B cell (primary cell): ENCODE measurements at regions of chr7 and their contacts with region 1.

Region 1: GRCh38 chr7:151368136-151368571 is 26.5 kb downstream of the NUB1 start:
- DNase-seq: peak; percentile 85
- ATAC-seq: peak; percentile 100
- H3K4me3 ChIP-seq: no peak overlapping the region
- H3K4me3 Mint-ChIP-seq: no peak overlapping the region
- H3K27ac ChIP-seq: no peak overlapping the region
- H3K27ac Mint-ChIP-seq: peak overlapping the region; percentile 13
- H3K4me1 ChIP-seq: peaks cover 0 to 5% of the 10 kb centered on the region in 2 donors
- H3K4me1 Mint-ChIP-seq: peaks cover 8% of the 10 kb centered on the region
- H3K27me3 ChIP-seq: no peaks in the 10 kb centered on the region
- H3K27me3 Mint-ChIP-seq: no peaks in the 10 kb centered on the region
- CTCF ChIP-seq: peak; percentile 94

Region 2: DNA sequence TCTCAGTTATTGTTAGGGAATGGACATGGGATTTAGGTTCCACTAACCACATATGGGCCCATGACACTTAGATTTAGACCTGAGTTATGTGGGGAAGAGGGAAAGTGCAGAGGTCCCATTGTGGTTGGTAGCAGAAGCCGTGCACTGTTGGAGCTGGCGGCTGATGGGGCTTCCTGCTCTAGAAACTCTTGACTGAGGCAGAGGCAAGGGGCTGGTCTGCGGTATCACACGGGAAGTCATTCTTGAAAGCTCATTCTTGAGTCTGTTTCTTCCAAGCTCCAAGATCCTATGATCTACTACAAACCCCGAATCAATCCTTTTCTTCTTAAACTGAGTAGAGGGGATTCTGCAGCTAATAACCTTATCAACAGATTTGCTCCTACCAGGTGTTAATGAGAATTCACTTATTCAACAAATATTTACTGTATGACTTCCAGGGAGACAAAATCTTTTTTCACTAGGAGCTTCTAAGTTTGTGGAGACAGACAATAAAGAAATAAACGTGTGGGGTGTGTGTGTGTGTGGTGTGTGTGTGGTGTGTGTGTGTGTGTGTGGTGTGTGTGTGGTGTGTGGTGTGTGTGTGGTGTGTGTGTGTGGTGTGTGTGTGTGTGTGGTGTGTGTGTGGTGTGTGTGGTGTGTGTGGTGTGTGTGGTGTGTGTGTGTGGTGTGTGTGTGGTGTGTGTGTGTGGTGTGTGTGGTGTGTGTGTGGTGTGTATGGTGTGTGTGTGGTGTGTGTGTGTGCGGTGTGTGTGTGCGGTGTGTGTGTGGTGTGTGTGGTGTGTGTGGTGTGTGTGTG is 458.8 kb before region 1 on chr7:
- CTCF ChIA-PET with region 1: no interaction called
- POLR2A ChIA-PET with region 1: no interaction called
- intact Hi-C with region 1: no loop called
- DNase-seq: no peak
- ATAC-seq: no peak
- H3K4me3 ChIP-seq: no peak overlapping the region
- H3K4me3 Mint-ChIP-seq: no peak overlapping the region
- H3K27ac ChIP-seq: no peak overlapping the region
- H3K27ac Mint-ChIP-seq: no peak overlapping the region
- H3K4me1 ChIP-seq: peaks cover 0 to 4% of the 10 kb centered on the region in 2 donors
- H3K4me1 Mint-ChIP-seq: no peaks in the 10 kb centered on the region
- H3K27me3 ChIP-seq: peaks cover 0 to 14% (median 2%) of the 10 kb centered on the region in 4 experiments
- H3K27me3 Mint-ChIP-seq: peaks cover 22% of the 10 kb centered on the region
- CTCF ChIP-seq: no peak

Region 3: GRCh38 chr7:151315038-151315655 is 53.0 kb before region 1 on chr7:
- CTCF ChIA-PET with region 1: interaction called, 81 read pairs
- POLR2A ChIA-PET with region 1: no interaction called
- intact Hi-C with region 1: no loop called
- DNase-seq: peak; percentile 85
- ATAC-seq: peak; percentile 86
- H3K4me3 ChIP-seq: no peak overlapping the region
- H3K4me3 Mint-ChIP-seq: no peak overlapping the region
- H3K27ac ChIP-seq: no peak overlapping the region
- H3K27ac Mint-ChIP-seq: no peak overlapping the region
- H3K4me1 ChIP-seq: peaks cover 0 to 3% of the 10 kb centered on the region in 2 donors
- H3K4me1 Mint-ChIP-seq: peaks cover 2% of the 10 kb centered on the region
- H3K27me3 ChIP-seq: peaks cover 0 to 4% (median 0%) of the 10 kb centered on the region in 4 experiments
- H3K27me3 Mint-ChIP-seq: no peaks in the 10 kb centered on the region
- CTCF ChIP-seq: peak; percentile 85

Region 4: GRCh38 chr7:151351027-151351426 is 17.1 kb before region 1 on chr7:
- CTCF ChIA-PET with region 1: interaction called, 77 read pairs
- POLR2A ChIA-PET with region 1: no interaction called
- intact Hi-C with region 1: loop called (anchors 1 kb)
- DNase-seq: peak; percentile 47
- ATAC-seq: no peak
- H3K4me3 ChIP-seq: no peak overlapping the region
- H3K4me3 Mint-ChIP-seq: peak overlapping the region; percentile 56
- H3K27ac ChIP-seq: peak overlapping the region; percentile 82 to 99
- H3K27ac Mint-ChIP-seq: peak overlapping the region; percentile 76
- H3K4me1 ChIP-seq: peaks cover 36 to 41% of the 10 kb centered on the region in 2 donors
- H3K4me1 Mint-ChIP-seq: peaks cover 46% of the 10 kb centered on the region
- H3K27me3 ChIP-seq: no peaks in the 10 kb centered on the region
- H3K27me3 Mint-ChIP-seq: no peaks in the 10 kb centered on the region
- CTCF ChIP-seq: no peak

Region 5: DNA sequence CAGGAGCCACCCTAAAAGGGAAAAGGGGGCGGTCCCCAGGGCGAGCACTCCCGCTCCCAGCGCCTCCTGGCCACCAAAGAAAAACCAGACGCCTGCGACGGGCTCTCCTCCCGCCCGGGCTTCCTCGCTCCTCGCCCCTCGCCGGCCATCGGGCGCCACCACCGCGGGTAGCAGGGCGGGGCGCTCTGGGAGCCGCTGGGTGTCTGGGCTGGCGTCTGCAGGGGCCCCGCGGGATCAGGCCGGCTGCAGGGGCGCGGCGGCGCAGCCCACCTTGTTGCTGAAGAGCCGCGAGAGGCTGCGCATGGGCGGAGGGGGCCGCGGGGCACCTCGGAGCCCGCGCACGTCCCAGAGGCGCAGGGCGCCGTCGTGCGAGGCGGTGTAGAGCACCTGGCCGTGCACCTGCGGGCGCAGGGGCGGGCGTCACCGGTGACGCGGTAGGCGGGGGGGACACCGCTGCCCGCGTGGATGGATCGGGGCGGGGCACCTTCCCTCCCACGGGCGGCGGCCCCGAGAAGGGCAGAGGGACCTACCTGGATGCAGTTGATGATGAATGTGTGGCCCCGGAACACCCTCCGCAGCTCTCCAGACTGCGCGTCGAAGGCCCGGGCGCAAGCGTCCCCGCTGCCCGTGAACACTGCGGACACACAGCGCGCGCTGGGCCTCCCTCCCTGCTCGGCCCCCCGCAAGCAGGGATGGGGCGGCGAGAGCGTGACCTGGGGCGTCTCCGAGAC is 13.4 kb after region 1 on chr7:
- CTCF ChIA-PET with region 1: interaction called, 10 read pairs
- POLR2A ChIA-PET with region 1: no interaction called
- intact Hi-C with region 1: loop called (anchors 1 kb)
- DNase-seq: peak; percentile 91
- ATAC-seq: peak; percentile 71
- H3K4me3 ChIP-seq: peak overlapping the region; percentile 9 to 83 (median 53)
- H3K4me3 Mint-ChIP-seq: peak overlapping the region; percentile 87
- H3K27ac ChIP-seq: peak overlapping the region; percentile 80 to 82
- H3K27ac Mint-ChIP-seq: peak overlapping the region; percentile 92
- H3K4me1 ChIP-seq: peaks cover 18 to 23% of the 10 kb centered on the region in 2 donors
- H3K4me1 Mint-ChIP-seq: peaks cover 23% of the 10 kb centered on the region
- H3K27me3 ChIP-seq: peaks cover 0 to 12% (median 6%) of the 10 kb centered on the region in 4 experiments
- H3K27me3 Mint-ChIP-seq: peaks cover 10% of the 10 kb centered on the region
- CTCF ChIP-seq: no peak

Region 6: GRCh38 chr7:151400626-151401315 is 32.6 kb after region 1 on chr7:
- CTCF ChIA-PET with region 1: interaction called, 10 read pairs
- POLR2A ChIA-PET with region 1: no interaction called
- intact Hi-C with region 1: loop called (anchors 2 kb)
- DNase-seq: peak; percentile 90
- ATAC-seq: peak; percentile 94
- H3K4me3 ChIP-seq: no peak overlapping the region
- H3K4me3 Mint-ChIP-seq: peak overlapping the region; percentile 64
- H3K27ac ChIP-seq: peak overlapping the region in 1 of 2 donors; percentile 35
- H3K27ac Mint-ChIP-seq: peak overlapping the region; percentile 91
- H3K4me1 ChIP-seq: peaks cover 13 to 16% of the 10 kb centered on the region in 2 donors
- H3K4me1 Mint-ChIP-seq: peaks cover 30% of the 10 kb centered on the region
- H3K27me3 ChIP-seq: peaks cover 0 to 5% (median 1%) of the 10 kb centered on the region in 4 experiments
- H3K27me3 Mint-ChIP-seq: no peaks in the 10 kb centered on the region
- CTCF ChIP-seq: no peak

Region 7: DNA sequence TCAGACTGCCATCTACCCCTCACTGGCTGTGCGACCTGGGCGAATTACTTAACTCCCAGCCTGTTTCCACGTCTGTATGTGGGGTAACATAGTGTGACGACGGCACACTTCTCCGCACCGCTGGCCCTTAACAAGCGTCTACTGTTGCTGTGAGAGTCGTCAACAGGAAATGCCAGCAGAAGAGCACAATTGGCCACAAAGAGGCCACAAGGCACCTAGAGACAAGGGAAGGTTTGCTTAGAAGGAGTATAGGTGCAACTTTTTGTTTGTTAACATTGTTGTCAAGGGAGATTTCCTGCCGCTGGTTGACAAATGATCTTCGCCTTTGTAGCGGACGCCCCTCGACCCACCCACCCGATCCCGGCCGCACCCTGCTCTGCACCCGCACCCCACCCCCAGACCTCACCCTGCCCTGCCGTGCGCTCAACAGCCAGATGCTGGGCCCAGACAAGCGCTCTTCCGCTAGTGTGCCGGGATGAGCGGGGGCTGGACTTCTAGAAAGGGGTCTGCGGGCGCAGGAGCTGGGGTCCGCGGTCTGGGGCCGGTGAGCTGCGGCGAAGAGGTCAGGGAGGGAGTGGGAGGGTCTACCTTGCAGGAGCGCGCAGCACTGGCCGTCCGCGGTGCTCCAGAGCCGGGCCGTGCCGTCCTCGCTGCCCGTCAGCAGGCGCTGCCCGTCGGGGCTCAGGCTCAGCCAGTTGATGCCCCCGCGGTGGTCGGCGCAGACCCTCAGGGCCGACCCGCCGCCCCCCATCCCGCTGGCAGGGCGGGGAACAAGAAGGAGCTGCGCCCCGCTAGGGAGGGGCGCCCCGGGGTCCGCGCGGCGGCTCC is 40.9 kb after region 1 on chr7:
- CTCF ChIA-PET with region 1: interaction called, 16 read pairs
- POLR2A ChIA-PET with region 1: no interaction called
- intact Hi-C with region 1: loop called (anchors 1 kb)
- DNase-seq: peak; percentile 87
- ATAC-seq: peak; percentile 79
- H3K4me3 ChIP-seq: peak overlapping the region in 4 of 5 experiments; percentile 15 to 29 (median 26)
- H3K4me3 Mint-ChIP-seq: peak overlapping the region; percentile 88
- H3K27ac ChIP-seq: no peak overlapping the region
- H3K27ac Mint-ChIP-seq: peak overlapping the region; percentile 67
- H3K4me1 ChIP-seq: peaks cover 34% of the 10 kb centered on the region in 2 donors
- H3K4me1 Mint-ChIP-seq: peaks cover 28% of the 10 kb centered on the region
- H3K27me3 ChIP-seq: peaks cover 0 to 60% (median 26%) of the 10 kb centered on the region in 4 experiments
- H3K27me3 Mint-ChIP-seq: peaks cover 42% of the 10 kb centered on the region
- CTCF ChIP-seq: peak; percentile 24

Region 8: DNA sequence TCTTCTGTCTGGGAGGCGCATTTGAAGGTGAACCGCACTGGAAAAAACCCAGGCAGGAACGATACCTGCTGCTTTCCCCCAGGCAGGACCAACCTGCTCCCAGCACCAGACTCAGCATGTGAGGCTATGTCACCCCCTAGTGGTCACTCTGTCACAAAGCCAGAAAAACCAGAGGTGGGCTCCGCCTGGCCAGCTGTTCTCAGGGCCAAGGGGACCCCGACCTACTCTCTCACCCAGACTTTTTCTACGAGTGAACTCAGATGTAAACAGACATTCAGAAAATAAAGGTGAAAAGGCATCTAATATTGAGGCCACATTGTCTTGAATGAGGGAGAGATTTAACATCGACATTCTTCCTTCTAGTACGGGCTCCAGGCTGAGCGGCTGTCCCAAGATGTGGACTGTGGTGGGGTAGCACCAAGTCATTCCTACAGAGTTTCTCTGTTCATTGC is 391.5 kb after region 1 on chr7:
- CTCF ChIA-PET with region 1: interaction called, 18 read pairs
- POLR2A ChIA-PET with region 1: no interaction called
- intact Hi-C with region 1: loop called (anchors 1 kb)
- DNase-seq: peak; percentile 69
- ATAC-seq: peak; percentile 70
- H3K4me3 ChIP-seq: no peak overlapping the region
- H3K4me3 Mint-ChIP-seq: no peak overlapping the region
- H3K27ac ChIP-seq: no peak overlapping the region
- H3K27ac Mint-ChIP-seq: peak overlapping the region; percentile 53
- H3K4me1 ChIP-seq: peaks cover 0 to 7% of the 10 kb centered on the region in 2 donors
- H3K4me1 Mint-ChIP-seq: peaks cover 16% of the 10 kb centered on the region
- H3K27me3 ChIP-seq: no peaks in the 10 kb centered on the region
- H3K27me3 Mint-ChIP-seq: no peaks in the 10 kb centered on the region
- CTCF ChIP-seq: peak; percentile 86